ENCODE measurements at regions of chr11 and their contacts with region 1.

Region 1: GRCh38 chr11:72141066-72141465 is 5.5 kb downstream of the FOLR3 start:
- DNase-seq: peak; percentile 62
- ATAC-seq: peak; percentile 87
- H3K4me3 Mint-ChIP-seq: no peak overlapping the region
- H3K27ac Mint-ChIP-seq: no peak overlapping the region
- H3K4me1 Mint-ChIP-seq: peaks cover 16% of the 10 kb centered on the region
- H3K27me3 Mint-ChIP-seq: peaks cover 14% of the 10 kb centered on the region

Region 2: DNA sequence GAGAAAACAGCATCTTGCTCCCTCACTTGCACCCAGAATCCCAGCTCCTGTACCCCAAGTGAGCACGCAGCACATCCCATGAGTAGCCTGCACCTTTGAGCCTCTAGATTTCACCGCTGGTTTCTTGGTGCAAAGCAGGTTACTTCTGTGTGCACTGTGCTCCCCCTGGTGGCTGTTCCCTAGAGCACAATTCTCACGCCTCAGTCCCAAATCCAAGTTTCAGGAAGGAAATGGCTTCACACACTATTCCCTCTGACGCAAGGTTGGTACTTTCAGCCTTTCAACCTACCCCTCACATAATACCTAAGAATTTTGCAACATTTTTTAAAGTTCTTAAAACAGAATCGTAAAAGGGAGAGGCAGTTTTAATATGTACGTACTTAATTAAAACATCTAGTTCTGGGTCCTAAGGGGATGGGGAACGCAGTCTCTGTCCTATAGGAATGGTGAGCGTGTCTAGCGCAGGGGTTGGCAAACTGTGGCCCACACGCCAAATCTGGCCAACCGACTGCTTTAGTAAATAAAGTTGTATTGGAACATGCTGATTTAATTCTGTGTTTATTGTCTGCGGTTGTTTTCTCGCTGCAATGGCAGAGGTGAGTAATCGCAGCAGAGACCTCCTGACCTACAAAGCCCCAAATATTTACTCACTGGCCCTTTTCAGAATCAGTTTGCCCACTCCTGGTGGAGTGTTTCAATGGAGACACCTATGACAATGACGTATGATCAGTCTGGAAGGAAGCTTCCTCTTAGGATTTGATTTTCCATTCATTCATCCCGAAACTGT is 720.4 kb before region 1 on chr11:
- CTCF ChIA-PET with region 1: no interaction called
- POLR2A ChIA-PET with region 1: no interaction called
- intact Hi-C with region 1: no loop called
- DNase-seq: peak; percentile 51
- ATAC-seq: no peak
- H3K4me3 Mint-ChIP-seq: no peak overlapping the region
- H3K27ac Mint-ChIP-seq: no peak overlapping the region
- H3K4me1 Mint-ChIP-seq: peaks cover 1% of the 10 kb centered on the region
- H3K27me3 Mint-ChIP-seq: no peaks in the 10 kb centered on the region

Region 3: GRCh38 chr11:71946144-71946571 is 194.9 kb before region 1 on chr11:
- CTCF ChIA-PET with region 1: no interaction called
- POLR2A ChIA-PET with region 1: no interaction called
- intact Hi-C with region 1: no loop called
- DNase-seq: peak; percentile 20
- ATAC-seq: peak; percentile 68
- H3K4me3 Mint-ChIP-seq: no peak overlapping the region
- H3K27ac Mint-ChIP-seq: peak overlapping the region; percentile 40
- H3K4me1 Mint-ChIP-seq: peaks cover 28% of the 10 kb centered on the region
- H3K27me3 Mint-ChIP-seq: no peaks in the 10 kb centered on the region

Region 4: GRCh38 chr11:72030472-72031045 is 110.5 kb before region 1 on chr11:
- CTCF ChIA-PET with region 1: interaction called, 40 read pairs
- POLR2A ChIA-PET with region 1: interaction called, 4 read pairs
- intact Hi-C with region 1: loop called (anchors 1 kb)
- DNase-seq: no peak
- ATAC-seq: no peak
- H3K4me3 Mint-ChIP-seq: no peak overlapping the region
- H3K27ac Mint-ChIP-seq: peak overlapping the region; percentile 43
- H3K4me1 Mint-ChIP-seq: peaks cover 50% of the 10 kb centered on the region
- H3K27me3 Mint-ChIP-seq: no peaks in the 10 kb centered on the region

Region 5: DNA sequence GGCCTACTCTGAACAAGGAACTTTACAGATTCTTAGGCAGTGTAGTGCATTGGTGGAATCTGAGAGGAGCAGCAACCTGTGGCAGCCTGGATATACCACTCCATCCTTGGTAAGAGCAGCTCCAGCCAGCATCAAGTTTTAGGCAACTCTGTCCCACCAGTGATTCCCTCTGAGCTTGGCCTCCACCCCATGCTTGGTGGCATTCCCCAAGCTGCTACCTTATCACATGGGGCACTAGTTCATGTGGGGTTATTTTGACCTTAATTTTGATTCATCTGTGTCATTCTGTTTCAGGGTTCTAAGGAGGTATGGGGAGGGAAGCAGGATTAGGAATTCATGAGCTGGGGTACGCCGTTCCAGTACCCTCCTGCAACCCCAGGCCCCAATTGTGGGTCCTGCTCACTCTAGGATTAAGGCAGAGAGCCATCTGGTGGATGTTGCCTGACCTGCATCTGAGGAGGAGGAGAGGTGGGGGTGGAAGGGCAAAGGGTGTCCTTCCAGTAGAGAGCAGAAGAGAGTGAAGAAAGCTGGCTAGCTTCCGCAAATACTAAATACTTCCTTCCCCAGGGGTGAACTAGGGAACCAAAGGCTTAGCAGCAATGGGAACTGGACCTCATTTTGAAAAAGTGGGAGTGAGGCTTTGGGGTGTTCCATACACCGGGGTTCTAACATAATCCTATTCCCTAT is 49.9 kb before region 1 on chr11:
- CTCF ChIA-PET with region 1: interaction called, 14 read pairs
- POLR2A ChIA-PET with region 1: no interaction called
- intact Hi-C with region 1: loop called in 1 of 2 experiments (anchors 2 kb)
- DNase-seq: peak; percentile 82
- ATAC-seq: peak; percentile 90
- H3K4me3 Mint-ChIP-seq: no peak overlapping the region
- H3K27ac Mint-ChIP-seq: no peak overlapping the region
- H3K4me1 Mint-ChIP-seq: peaks cover 13% of the 10 kb centered on the region
- H3K27me3 Mint-ChIP-seq: no peaks in the 10 kb centered on the region

Region 6: DNA sequence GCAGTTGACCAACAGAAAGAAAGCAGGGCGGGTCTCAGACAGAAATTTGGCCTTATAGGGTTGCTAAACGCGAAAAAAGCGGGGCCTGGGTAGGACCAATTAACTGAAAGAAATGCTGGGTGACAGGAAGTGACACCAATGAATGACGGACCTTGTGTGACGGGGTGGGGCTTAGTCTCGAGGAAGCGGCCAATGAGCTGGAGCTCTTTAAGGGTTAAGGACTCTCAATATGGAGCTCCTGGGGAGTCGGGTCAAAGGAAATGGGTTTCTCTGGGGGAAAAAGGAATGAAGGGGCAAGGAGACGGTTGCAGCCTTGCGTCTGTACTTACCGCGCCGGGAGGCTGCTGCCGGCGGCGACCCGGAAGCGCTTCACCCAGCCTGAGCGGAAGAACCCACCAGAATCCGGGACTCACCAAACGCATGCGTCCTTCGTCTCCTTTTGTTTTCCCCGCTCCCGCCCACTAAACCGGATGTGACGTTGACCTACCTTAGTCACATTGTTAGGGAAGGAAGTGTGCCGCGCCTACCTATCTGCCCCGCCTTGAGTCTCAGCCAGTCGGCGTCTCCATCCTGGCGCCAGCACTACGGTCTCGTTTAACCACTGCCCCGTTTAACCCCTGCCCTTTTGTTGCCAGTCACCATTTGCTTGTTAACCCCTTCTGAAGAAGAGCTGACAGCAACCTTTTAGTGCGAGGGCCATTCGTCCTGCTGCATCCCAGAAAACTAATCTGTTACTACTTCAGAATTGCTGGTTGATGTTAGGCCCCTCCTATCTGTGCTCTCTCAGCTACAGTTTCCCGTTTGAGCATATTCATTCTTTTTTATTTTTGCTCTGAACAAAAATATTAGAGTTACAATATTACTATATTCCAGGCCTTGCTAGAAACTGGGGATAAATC is 28.5 kb before region 1 on chr11 and contains the start of gene ANAPC15:
- CTCF ChIA-PET with region 1: interaction called, 5 read pairs
- POLR2A ChIA-PET with region 1: interaction called, 3 read pairs
- intact Hi-C with region 1: loop called in 1 of 2 experiments (anchors 2 kb)
- DNase-seq: peak; percentile 100
- ATAC-seq: peak; percentile 89
- H3K4me3 Mint-ChIP-seq: peak within 1 kb of the TSS; percentile 92
- H3K27ac Mint-ChIP-seq: peak within 1 kb of the TSS; percentile 98
- H3K4me1 Mint-ChIP-seq: peaks cover 16% of the 10 kb centered on the region
- H3K27me3 Mint-ChIP-seq: no peaks in the 10 kb centered on the region
- total RNA-seq, gene ANAPC15: 60.3 to 76.1 TPM

Region 7: GRCh38 chr11:72154816-72155215 is 13.8 kb after region 1 on chr11:
- CTCF ChIA-PET with region 1: interaction called, 19 read pairs
- POLR2A ChIA-PET with region 1: no interaction called
- intact Hi-C with region 1: no loop called
- DNase-seq: no peak
- ATAC-seq: no peak
- H3K4me3 Mint-ChIP-seq: no peak overlapping the region
- H3K27ac Mint-ChIP-seq: no peak overlapping the region
- H3K4me1 Mint-ChIP-seq: no peaks in the 10 kb centered on the region
- H3K27me3 Mint-ChIP-seq: peaks cover 7% of the 10 kb centered on the region

Region 8: GRCh38 chr11:72179804-72180396 is 38.8 kb after region 1 on chr11:
- CTCF ChIA-PET with region 1: interaction called, 12 read pairs
- POLR2A ChIA-PET with region 1: no interaction called
- intact Hi-C with region 1: loop called in 1 of 2 experiments (anchors 1 kb)
- DNase-seq: peak; percentile 16
- ATAC-seq: peak; percentile 56
- H3K4me3 Mint-ChIP-seq: no peak overlapping the region
- H3K27ac Mint-ChIP-seq: peak overlapping the region; percentile 12
- H3K4me1 Mint-ChIP-seq: peaks cover 12% of the 10 kb centered on the region
- H3K27me3 Mint-ChIP-seq: peaks cover 6% of the 10 kb centered on the region

Region 9: GRCh38 chr11:72195871-72196270 is 54.8 kb after region 1 on chr11:
- CTCF ChIA-PET with region 1: no interaction called
- POLR2A ChIA-PET with region 1: no interaction called
- intact Hi-C with region 1: no loop called
- DNase-seq: no peak
- ATAC-seq: no peak
- H3K4me3 Mint-ChIP-seq: no peak overlapping the region
- H3K27ac Mint-ChIP-seq: no peak overlapping the region
- H3K4me1 Mint-ChIP-seq: no peaks in the 10 kb centered on the region
- H3K27me3 Mint-ChIP-seq: no peaks in the 10 kb centered on the region

Region 10: GRCh38 chr11:72609045-72609444 is 468.0 kb after region 1 on chr11:
- CTCF ChIA-PET with region 1: no interaction called
- POLR2A ChIA-PET with region 1: no interaction called
- intact Hi-C with region 1: no loop called
- DNase-seq: peak; percentile 21
- ATAC-seq: peak; percentile 60
- H3K4me3 Mint-ChIP-seq: no peak overlapping the region
- H3K27ac Mint-ChIP-seq: no peak overlapping the region
- H3K4me1 Mint-ChIP-seq: peaks cover 2% of the 10 kb centered on the region
- H3K27me3 Mint-ChIP-seq: peaks cover 8% of the 10 kb centered on the region